Activated T-helper 2 cell treated with anti-CD3 and anti-CD28 coated beads, Interferon-gamma antibody, Interleukin-2, Interleukin-4, amounts not matched to agents 10 μg/mL and 5 μg/mL and 100 μg/mL, durations not matched to agents 14 hours and 24 hours and 36 hours (primary cell): ENCODE measurements at regions of chr6 and their contacts with region 1.

Region 1: DNA sequence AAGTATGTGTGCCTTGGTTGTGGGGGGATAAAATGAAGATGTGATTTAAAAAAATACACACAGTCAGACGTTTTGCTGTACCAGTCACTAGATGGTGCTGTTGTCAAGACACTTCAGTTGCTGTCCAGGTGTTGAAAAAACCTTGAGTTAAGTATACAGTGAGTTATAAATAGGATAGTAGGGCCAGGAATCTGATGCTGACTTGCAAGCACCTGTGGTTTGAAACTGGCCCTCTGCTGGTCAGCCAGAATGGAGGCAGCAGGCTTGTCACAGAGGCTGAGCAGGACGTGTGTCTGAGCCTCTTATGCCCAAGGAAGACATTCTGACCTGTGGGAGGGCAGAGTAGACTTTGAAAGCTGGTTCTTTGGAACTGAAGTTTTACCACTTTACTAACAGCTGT is 27.8 kb downstream of the RNF8 start:
- DNase-seq: no peak
- H3K4me3 Mint-ChIP-seq: no peak overlapping the region
- H3K27ac Mint-ChIP-seq: no peak overlapping the region
- H3K4me1 Mint-ChIP-seq: no peaks in the 10 kb centered on the region
- H3K27me3 Mint-ChIP-seq: no peaks in the 10 kb centered on the region

Region 2: GRCh38 chr6:37538107-37538506 is 156.5 kb after region 1 on chr6:
- intact Hi-C with region 1: no loop called
- DNase-seq: no peak
- H3K4me3 Mint-ChIP-seq: no peak overlapping the region
- H3K27ac Mint-ChIP-seq: no peak overlapping the region
- H3K4me1 Mint-ChIP-seq: peaks cover 2% of the 10 kb centered on the region
- H3K27me3 Mint-ChIP-seq: peaks cover 36% of the 10 kb centered on the region

Region 3: GRCh38 chr6:37566111-37566949 is 184.8 kb after region 1 on chr6:
- intact Hi-C with region 1: loop called (anchors 1 kb)
- DNase-seq: peak; percentile 58
- H3K4me3 Mint-ChIP-seq: no peak overlapping the region
- H3K27ac Mint-ChIP-seq: no peak overlapping the region
- H3K4me1 Mint-ChIP-seq: no peaks in the 10 kb centered on the region
- H3K27me3 Mint-ChIP-seq: peaks cover 19% of the 10 kb centered on the region